H1 (cell line): ENCODE measurements at regions of chr7 and their contacts with region 1.

Region 1: GRCh38 chr7:140494867-140495266 is 15.6 kb upstream of the MKRN1 start:
- DNase-seq: no peak
- H3K4me3 ChIP-seq: no peak overlapping the region
- H3K27ac ChIP-seq: no peak overlapping the region
- H3K4me1 ChIP-seq: no peaks in the 10 kb centered on the region
- H3K27me3 ChIP-seq: no peaks in the 10 kb centered on the region
- CTCF ChIP-seq: no peak
- EP300 ChIP-seq: no peak
- POLR2A ChIP-seq: no peak
- RAD21 ChIP-seq: no peak

Region 2: GRCh38 chr7:140479062-140479738 is 15.7 kb before region 1 on chr7 and contains the start of gene MKRN1:
- CTCF ChIA-PET with region 1: interaction called, 67 read pairs
- POLR2A ChIA-PET with region 1: interaction called, 9 read pairs
- DNase-seq: peak; percentile 94 to 97
- H3K4me3 ChIP-seq: peak within 1 kb of the TSS; percentile 84 to 96 (median 88)
- H3K27ac ChIP-seq: peak within 1 kb of the TSS; percentile 85
- H3K4me1 ChIP-seq: peaks cover 0 to 12% (median 5%) of the 10 kb centered on the region in 4 experiments; a peak in 3 of 7 replicates
- H3K27me3 ChIP-seq: no peaks in the 10 kb centered on the region
- CTCF ChIP-seq: no peak
- EP300 ChIP-seq: no peak
- POLR2A ChIP-seq: peak; percentile 21 to 69
- RAD21 ChIP-seq: no peak
- total RNA-seq, gene MKRN1: 94.6 and 99.6 TPM in 2 replicates

Region 3: DNA sequence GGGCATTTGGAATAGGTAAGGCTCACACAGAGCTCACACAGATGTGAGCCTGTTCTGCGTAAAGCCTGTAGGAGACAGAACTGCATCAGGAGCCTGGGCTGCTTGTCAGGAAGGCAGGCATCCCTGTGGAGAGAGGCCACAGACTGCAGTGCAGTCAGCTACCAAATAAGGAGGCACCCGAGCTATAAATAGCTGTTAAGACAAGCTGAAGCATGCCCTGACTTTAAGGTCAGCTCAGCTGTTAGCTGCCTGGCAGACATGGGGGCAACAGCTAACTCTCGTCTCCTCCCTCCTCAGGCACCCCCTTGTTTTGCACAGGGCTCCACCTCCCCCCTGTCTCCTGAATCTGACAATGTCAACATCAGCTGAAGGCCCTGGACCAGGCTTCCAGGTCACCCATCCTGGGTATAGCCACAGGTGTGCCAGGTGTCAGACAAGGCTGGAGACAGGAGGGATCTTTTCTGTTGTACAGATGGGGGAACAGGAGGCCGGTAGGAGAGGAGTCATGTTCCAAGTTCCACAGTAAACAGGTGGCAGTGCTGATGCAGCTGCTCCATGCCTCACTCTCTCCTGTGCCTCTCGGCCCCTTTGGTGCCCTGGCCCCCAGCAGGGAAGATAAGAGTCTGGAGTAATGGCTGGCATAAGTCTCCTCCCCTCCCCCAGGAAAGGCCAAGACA is 12.1 kb after region 1 on chr7:
- CTCF ChIA-PET with region 1: interaction called, 10 read pairs
- POLR2A ChIA-PET with region 1: no interaction called
- DNase-seq: peak; percentile 34 to 57
- H3K4me3 ChIP-seq: no peak overlapping the region
- H3K27ac ChIP-seq: no peak overlapping the region; the same call in 1 of the 2 replicates
- H3K4me1 ChIP-seq: peaks cover 5 to 13% (median 5%) of the 10 kb centered on the region in 4 experiments; a peak in 5 of 7 replicates
- H3K27me3 ChIP-seq: no peaks in the 10 kb centered on the region
- CTCF ChIP-seq: peak in 1 of 3 experiments; percentile 25; a peak in 1 of 4 replicates
- EP300 ChIP-seq: no peak
- POLR2A ChIP-seq: no peak
- RAD21 ChIP-seq: peak; percentile 31 to 54

Region 4: DNA sequence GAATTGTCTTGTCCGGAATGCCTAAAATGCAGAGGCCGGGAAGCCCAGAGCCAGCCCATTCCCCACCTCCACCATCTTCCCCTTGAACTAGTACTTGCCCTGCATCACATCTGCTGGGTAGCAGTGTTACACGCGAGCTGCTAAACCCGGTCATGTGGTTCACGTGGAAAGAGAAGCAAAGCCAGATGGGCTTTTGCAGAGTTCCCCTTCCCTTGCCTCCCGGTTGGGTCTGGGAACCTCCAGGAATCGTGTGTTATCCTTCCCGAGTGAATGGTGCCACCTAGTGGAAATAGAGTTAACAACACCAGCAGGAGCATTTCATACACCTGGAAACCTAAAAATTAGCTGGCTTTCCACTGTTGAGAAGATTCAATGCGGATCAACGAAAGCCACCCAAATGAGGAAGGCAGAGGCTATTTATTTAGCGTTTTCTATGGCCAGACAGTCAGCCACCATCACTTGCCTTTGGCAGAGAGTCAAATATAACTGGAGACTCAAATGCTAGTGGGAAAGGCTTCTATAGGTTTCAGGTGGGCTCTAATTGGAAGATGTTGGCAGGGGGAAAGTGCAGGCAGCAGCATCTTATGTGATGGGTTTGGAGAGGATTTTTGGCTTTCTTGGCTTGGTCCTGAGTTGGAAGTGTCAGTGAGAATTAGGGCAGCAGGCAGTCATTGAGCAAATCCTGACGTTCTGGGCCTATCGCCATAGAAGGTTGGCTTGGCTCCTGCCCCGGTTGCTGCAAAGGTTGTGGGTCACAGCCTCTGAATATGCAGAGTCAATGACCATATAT is 158.6 kb after region 1 on chr7:
- CTCF ChIA-PET with region 1: interaction called, 15 read pairs
- POLR2A ChIA-PET with region 1: no interaction called
- DNase-seq: peak in 1 of 2 experiments; percentile 70
- H3K4me3 ChIP-seq: no peak overlapping the region; a peak in 1 of 8 replicates
- H3K27ac ChIP-seq: no peak overlapping the region
- H3K4me1 ChIP-seq: no peaks in the 10 kb centered on the region; a peak in 1 of 7 replicates
- H3K27me3 ChIP-seq: no peaks in the 10 kb centered on the region; a peak in 1 of 7 replicates
- CTCF ChIP-seq: peak; percentile 26 to 92 (median 86)
- EP300 ChIP-seq: no peak
- POLR2A ChIP-seq: no peak
- RAD21 ChIP-seq: peak; percentile 99